ENCODE measurements at regions of chr20 and their contacts with region 1.

Region 1: DNA sequence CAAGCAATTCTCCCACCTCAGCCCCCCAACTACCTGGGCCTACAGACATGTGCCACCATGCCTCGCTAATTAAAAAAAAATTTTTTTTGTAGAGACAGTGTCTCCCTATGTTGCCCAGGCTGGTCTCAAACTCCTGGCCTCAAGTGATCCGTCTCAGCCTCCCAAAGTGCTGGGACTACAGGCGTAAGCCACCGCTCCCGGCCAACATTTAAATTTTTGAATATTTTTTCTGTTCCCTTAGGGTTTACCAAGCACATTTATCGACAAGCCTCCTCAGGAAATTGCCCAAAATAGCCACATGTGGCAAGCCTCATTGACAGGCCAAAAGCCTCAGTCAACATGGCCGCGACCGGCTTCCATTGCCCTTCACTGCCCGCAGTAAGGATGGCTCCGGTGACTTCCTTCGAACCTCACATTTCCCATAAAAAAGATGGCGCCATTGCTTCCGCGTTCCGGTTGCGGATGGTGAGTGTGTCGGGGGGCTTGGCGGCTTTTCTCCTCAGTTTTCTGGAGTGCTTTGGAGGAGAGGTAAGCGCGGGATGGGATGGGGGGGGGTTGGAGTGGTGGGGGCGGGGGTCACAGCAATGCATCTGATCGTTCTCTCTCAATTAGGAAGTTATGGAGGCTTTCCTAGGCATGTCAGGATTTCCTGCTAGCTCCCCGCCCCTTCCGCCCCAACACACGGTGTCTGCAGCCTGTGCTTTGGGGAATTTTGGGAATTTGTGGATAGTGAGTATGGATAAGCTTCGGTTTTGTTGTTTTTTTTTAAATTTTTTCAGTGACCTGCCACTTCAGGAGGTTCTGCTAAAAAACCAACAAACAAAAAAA is at the start of gene SHLD1:
- DNase-seq: peak; percentile 55 to 92 (median 81)
- ATAC-seq: peak; percentile 98
- H3K4me3 ChIP-seq: peak within 1 kb of the TSS; percentile 69 to 86
- H3K4me3 Mint-ChIP-seq: peak within 1 kb of the TSS; percentile 96
- H3K27ac ChIP-seq: peak within 1 kb of the TSS; percentile 70 to 71
- H3K27ac Mint-ChIP-seq: peak within 1 kb of the TSS; percentile 96
- H3K4me1 ChIP-seq: peaks cover 24% of the 10 kb centered on the region
- H3K4me1 Mint-ChIP-seq: peaks cover 28% of the 10 kb centered on the region
- H3K27me3 ChIP-seq: no peaks in the 10 kb centered on the region
- H3K27me3 Mint-ChIP-seq: no peaks in the 10 kb centered on the region
- CTCF ChIP-seq: no peak
- total RNA-seq, gene SHLD1: 4.2 to 5.9 TPM

Region 2: GRCh38 chr20:5691918-5692618 is 58.1 kb before region 1 on chr20:
- CTCF ChIA-PET with region 1: no interaction called
- POLR2A ChIA-PET with region 1: no interaction called
- intact Hi-C with region 1: loop called in 1 of 2 experiments (anchors 10 kb)
- DNase-seq: peak in 2 of 9 experiments; percentile 10 to 33
- ATAC-seq: no peak
- H3K4me3 ChIP-seq: no peak overlapping the region
- H3K4me3 Mint-ChIP-seq: no peak overlapping the region
- H3K27ac ChIP-seq: no peak overlapping the region
- H3K27ac Mint-ChIP-seq: peak overlapping the region; percentile 43
- H3K4me1 ChIP-seq: no peaks in the 10 kb centered on the region
- H3K4me1 Mint-ChIP-seq: peaks cover 4% of the 10 kb centered on the region
- H3K27me3 ChIP-seq: peaks cover 0 to 2% of the 10 kb centered on the region in 2 experiments
- H3K27me3 Mint-ChIP-seq: no peaks in the 10 kb centered on the region
- CTCF ChIP-seq: no peak

Measured in CD8-positive, alpha-beta T cell (primary cell).